ENCODE measurements at regions of chr3 and their contacts with region 1.

Region 1: DNA sequence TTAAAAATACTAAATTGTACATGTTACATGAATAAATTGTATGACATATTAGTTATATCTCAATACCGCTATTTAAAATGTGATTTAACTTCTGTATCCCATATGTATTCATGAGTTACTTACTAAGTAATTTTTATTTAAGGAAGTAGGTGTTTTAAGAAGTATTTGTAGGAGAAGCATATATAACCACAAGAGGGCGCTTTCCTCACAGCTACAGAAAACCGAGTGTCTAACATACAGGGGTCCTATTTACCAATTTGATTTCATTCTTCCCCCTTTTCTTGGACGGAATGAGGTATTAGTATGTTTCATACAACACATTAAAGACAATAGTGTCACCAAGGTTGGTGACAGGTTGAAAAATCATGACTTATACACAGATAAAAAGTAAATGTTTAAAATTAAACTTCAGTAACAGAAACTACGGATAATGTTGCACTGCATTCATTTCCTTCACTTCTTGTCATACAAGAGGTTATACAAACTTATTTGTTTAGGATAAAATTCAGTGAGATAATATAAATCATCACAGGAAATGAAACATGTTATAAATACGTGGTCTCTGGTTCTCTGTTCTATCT is 253.6 kb downstream of the MAGI1 start:
- DNase-seq: peak; percentile 20 to 44 (median 26)
- ATAC-seq: peak; percentile 65; the same call in 2 of the 3 replicates
- H3K4me3 ChIP-seq: no peak overlapping the region
- H3K27ac ChIP-seq: no peak overlapping the region
- H3K4me1 ChIP-seq: no peaks in the 10 kb centered on the region
- H3K27me3 ChIP-seq: peaks cover 0 to 2% of the 10 kb centered on the region in 2 experiments; a peak in 2 of 5 replicates
- CTCF ChIP-seq: peak; percentile 45 to 65 (median 52); a peak in 5 of 6 replicates
- EP300 ChIP-seq: no peak
- POLR2A ChIP-seq: no peak
- RAD21 ChIP-seq: peak; percentile 43 to 73; a peak in 3 of 4 replicates

Region 2: GRCh38 chr3:64627471-64628321 is 1157.5 kb before region 1 on chr3:
- CTCF ChIA-PET with region 1: no interaction called
- POLR2A ChIA-PET with region 1: no interaction called
- in situ Hi-C with region 1: no loop called
- intact Hi-C with region 1: no loop called
- DNase-seq: no peak
- ATAC-seq: no peak
- H3K4me3 ChIP-seq: no peak overlapping the region
- H3K27ac ChIP-seq: no peak overlapping the region
- H3K4me1 ChIP-seq: no peaks in the 10 kb centered on the region
- H3K27me3 ChIP-seq: no peaks in the 10 kb centered on the region
- CTCF ChIP-seq: no peak
- EP300 ChIP-seq: no peak
- POLR2A ChIP-seq: no peak
- RAD21 ChIP-seq: no peak

Region 3: GRCh38 chr3:65659396-65659795 is 125.8 kb before region 1 on chr3:
- CTCF ChIA-PET with region 1: no interaction called
- POLR2A ChIA-PET with region 1: no interaction called
- in situ Hi-C with region 1: no loop called
- intact Hi-C with region 1: no loop called
- DNase-seq: peak in 1 of 4 experiments; percentile 14
- ATAC-seq: no peak
- H3K4me3 ChIP-seq: no peak overlapping the region
- H3K27ac ChIP-seq: no peak overlapping the region
- H3K4me1 ChIP-seq: peaks cover 0 to under 1% of the 10 kb centered on the region in 2 experiments; a peak in 1 of 5 replicates
- H3K27me3 ChIP-seq: no peaks in the 10 kb centered on the region
- CTCF ChIP-seq: no peak
- EP300 ChIP-seq: no peak
- POLR2A ChIP-seq: no peak
- RAD21 ChIP-seq: no peak

Region 4: DNA sequence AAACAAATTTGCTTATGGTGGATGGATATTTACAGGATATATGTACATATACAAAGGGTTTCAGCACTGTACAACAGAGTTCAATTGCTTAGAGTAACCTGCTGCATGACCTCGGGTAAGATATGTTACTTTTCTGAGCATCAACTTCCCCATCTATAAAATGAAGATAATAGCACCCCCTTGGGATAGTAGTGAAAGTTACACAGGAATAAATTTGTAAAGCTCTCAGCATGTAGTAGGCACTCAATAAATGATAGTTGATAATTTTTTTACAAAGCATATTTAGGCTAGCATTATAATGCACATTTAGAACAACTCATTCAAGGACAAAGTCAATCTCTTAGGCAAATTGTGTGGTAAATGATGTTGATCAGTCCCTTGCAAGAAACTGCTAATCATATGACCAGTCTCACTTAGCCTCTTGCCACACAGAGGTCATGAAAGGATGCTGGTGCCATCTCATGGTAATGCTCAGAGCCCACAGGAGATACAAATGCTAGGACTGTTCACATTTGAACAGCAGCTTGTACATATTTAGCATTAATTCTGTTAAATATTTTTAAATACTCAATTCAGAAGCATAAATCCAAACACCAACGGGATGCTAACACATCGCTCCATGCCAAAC is 129.7 kb after region 1 on chr3:
- CTCF ChIA-PET with region 1: no interaction called
- POLR2A ChIA-PET with region 1: no interaction called
- in situ Hi-C with region 1: no loop called
- intact Hi-C with region 1: loop called (anchors 10 kb)
- DNase-seq: no peak
- ATAC-seq: no peak
- H3K4me3 ChIP-seq: no peak overlapping the region
- H3K27ac ChIP-seq: no peak overlapping the region
- H3K4me1 ChIP-seq: no peaks in the 10 kb centered on the region
- H3K27me3 ChIP-seq: no peaks in the 10 kb centered on the region; a peak in 1 of 5 replicates
- CTCF ChIP-seq: peak in 1 of 3 experiments; percentile 29; a peak in 2 of 6 replicates
- EP300 ChIP-seq: no peak
- POLR2A ChIP-seq: no peak
- RAD21 ChIP-seq: peak in 1 of 2 experiments; percentile 21; a peak in 1 of 4 replicates

Region 5: DNA sequence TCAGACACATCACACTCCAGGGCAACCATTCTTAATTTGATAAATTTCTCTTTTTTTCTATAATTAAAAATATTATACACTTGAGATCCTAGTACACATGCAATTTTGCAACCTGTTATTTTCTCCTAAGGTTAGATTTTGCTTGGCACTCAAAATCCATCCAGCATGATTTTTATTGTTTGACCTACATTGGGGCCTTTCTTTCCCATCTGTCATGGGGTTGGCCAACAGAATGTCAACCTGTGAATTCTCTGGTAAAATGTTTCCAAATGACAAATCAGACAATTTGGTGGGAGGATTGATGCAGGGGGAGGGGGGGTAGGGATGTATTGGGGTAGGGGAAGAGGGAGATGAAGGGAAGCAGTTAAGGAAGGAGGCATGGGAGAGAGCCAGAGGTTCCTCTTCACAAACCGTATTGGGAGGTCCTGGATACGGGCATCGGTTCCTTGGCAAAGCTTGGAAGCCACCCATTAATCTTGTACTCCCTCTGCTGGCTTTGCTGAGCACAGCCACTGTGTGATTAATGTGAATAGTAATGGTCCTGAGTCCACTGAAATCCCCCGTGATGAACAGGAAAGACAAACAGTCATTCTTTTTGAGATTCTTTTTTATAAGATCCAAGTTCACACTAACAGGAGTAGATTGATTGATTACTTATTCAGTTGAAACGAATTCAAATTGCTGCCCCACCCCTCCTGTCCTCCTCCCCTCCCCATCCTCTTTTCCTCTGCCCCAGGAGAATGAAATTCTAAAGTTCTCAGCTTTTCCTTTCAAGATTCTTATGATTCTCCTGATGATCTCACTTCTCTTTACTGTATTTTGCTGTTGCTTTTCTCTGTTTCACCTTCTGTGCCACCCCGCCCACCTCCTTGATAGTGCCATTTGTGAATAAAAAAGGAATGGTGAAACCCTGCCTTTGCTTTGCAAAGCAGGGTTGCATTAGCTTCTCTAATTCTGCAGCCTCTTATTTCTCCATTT is 353.5 kb after region 1 on chr3:
- CTCF ChIA-PET with region 1: interaction called, 4 read pairs
- POLR2A ChIA-PET with region 1: no interaction called
- in situ Hi-C with region 1: loop called (anchors 25 kb)
- intact Hi-C with region 1: loop called (anchors 1 kb)
- DNase-seq: peak; percentile 6 to 34 (median 16)
- ATAC-seq: peak; percentile 77
- H3K4me3 ChIP-seq: no peak overlapping the region
- H3K27ac ChIP-seq: no peak overlapping the region
- H3K4me1 ChIP-seq: no peaks in the 10 kb centered on the region
- H3K27me3 ChIP-seq: peaks cover 0 to 2% of the 10 kb centered on the region in 2 experiments; a peak in 1 of 5 replicates
- CTCF ChIP-seq: peak; percentile 52 to 53 (median 53)
- EP300 ChIP-seq: no peak
- POLR2A ChIP-seq: no peak
- RAD21 ChIP-seq: peak; percentile 15 to 59; a peak in 2 of 4 replicates

Measured in K562 (cell line).